ENCODE measurements at regions of chr9 and their contacts with region 1.

Region 1: DNA sequence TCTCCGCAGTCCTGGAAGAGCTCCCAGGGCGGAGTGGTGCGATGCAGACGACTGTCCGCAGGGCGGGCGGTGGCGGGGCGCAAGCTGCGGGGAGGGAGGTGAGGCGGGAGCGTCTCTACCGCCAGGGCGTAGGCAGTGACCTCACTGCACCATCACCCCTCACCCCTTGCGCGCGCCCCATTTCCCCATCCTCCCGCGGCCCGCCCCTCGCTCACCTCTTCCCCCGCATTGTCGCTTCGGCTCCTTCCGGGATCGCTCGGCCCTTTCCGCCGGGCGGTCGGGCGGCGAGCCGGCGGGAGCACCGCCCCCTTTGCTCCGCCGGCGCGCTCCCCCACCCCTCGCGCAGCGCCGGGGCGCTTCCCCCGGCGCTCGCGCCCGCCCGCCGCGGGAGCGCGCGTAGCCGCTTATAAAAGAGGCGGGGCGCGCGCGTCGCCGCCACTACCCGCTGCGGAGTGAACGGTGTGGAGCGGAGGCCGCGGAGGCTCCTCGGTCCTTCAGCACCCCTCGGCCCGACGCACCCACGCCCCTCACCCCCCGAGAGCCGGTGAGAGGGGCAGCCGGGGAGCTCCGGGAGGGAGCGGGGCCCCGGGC is at the start of gene SPTAN1:
- DNase-seq: peak; percentile 92 to 98 (median 96)
- ATAC-seq: peak; percentile 94
- H3K4me3 ChIP-seq: peak within 1 kb of the TSS; percentile 84
- H3K4me3 Mint-ChIP-seq: peak within 1 kb of the TSS in 7 of 10 donors; percentile 85 to 94 (median 92)
- H3K27ac ChIP-seq: peak within 1 kb of the TSS; percentile 94
- H3K27ac Mint-ChIP-seq: peak within 1 kb of the TSS; percentile 92 to 98 (median 97)
- H3K4me1 ChIP-seq: peaks cover 44 to 45% of the 10 kb centered on the region in 2 donors
- H3K4me1 Mint-ChIP-seq: peaks cover 15 to 38% (median 34%) of the 10 kb centered on the region in 7 donors
- H3K27me3 ChIP-seq: no peaks in the 10 kb centered on the region
- H3K27me3 Mint-ChIP-seq: no peaks in the 10 kb centered on the region
- total RNA-seq, gene SPTAN1: 336 to 433 (median 375) TPM

Region 2: GRCh38 chr9:128275996-128276573 is 276.2 kb before region 1 on chr9 and contains the starts of genes GOLGA2 and SWI5:
- CTCF ChIA-PET with region 1: no interaction called
- POLR2A ChIA-PET with region 1: no interaction called
- intact Hi-C with region 1: loop called in 1 of 2 experiments (anchors 1 kb)
- DNase-seq: peak; percentile 98 to 100 (median 100)
- ATAC-seq: peak; percentile 98
- H3K4me3 ChIP-seq: peak within 1 kb of the TSS; percentile 95
- H3K4me3 Mint-ChIP-seq: peak within 1 kb of the TSS; percentile 94 to 98 (median 96)
- H3K27ac ChIP-seq: peak within 1 kb of the TSS; percentile 90
- H3K27ac Mint-ChIP-seq: peak within 1 kb of the TSS; percentile 94 to 98 (median 97)
- H3K4me1 ChIP-seq: peaks cover 16 to 21% of the 10 kb centered on the region in 2 donors
- H3K4me1 Mint-ChIP-seq: peaks cover 24 to 51% (median 46%) of the 10 kb centered on the region in 7 donors
- H3K27me3 ChIP-seq: no peaks in the 10 kb centered on the region
- H3K27me3 Mint-ChIP-seq: peaks cover 0 to 7% (median 0%) of the 10 kb centered on the region in 5 donors
- total RNA-seq, gene GOLGA2: 56.5 to 76.6 (median 70.6) TPM
- total RNA-seq, gene SWI5: 8.7 to 17.4 (median 9.8) TPM

Region 3: DNA sequence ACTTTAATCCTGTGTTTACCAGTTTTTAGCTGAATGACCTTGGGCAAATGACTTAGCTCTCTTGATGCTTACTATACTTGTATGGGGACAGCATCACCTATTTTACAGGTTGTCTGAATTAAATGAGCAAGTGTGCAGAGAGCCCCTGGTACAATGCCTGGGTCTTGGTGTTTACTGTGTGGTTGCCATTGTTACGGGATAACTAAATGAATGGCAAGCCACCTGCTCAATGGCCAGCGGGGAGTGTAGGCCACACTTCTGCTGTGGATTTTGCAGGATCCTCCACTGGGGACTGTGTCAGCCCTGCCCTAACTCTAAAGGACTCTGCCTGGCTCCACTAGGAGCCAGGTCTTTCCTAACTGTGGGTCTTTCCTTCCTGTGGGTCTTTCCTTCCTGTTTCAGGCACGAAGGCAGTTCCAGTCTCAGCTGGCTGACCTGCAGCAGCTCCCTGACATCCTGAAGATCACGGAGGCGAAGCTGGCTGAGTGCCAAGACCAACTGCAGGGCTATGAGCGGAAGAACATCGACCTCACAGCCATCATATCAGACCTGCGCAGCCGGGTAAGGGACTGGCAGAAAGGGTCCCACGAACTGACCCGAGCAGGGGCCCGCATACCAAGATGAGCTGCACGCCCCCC is 58.0 kb before region 1 on chr9:
- CTCF ChIA-PET with region 1: no interaction called
- POLR2A ChIA-PET with region 1: interaction called, 11 read pairs
- intact Hi-C with region 1: no loop called
- DNase-seq: peak in 5 of 9 donors; percentile 15 to 43 (median 27)
- ATAC-seq: no peak
- H3K4me3 ChIP-seq: no peak overlapping the region
- H3K4me3 Mint-ChIP-seq: peak overlapping the region in 2 of 10 donors; percentile 42 to 56
- H3K27ac ChIP-seq: no peak overlapping the region
- H3K27ac Mint-ChIP-seq: peak overlapping the region in 7 of 9 donors; percentile 59 to 78 (median 71)
- H3K4me1 ChIP-seq: no peaks in the 10 kb centered on the region
- H3K4me1 Mint-ChIP-seq: peaks cover 0 to 19% (median 15%) of the 10 kb centered on the region in 7 donors
- H3K27me3 ChIP-seq: no peaks in the 10 kb centered on the region
- H3K27me3 Mint-ChIP-seq: no peaks in the 10 kb centered on the region

Region 4: GRCh38 chr9:128575469-128575868 is 23.2 kb after region 1 on chr9:
- CTCF ChIA-PET with region 1: interaction called, 3 read pairs
- POLR2A ChIA-PET with region 1: interaction called, 17 read pairs
- intact Hi-C with region 1: no loop called
- DNase-seq: no peak
- ATAC-seq: no peak
- H3K4me3 ChIP-seq: no peak overlapping the region
- H3K4me3 Mint-ChIP-seq: peak overlapping the region in 4 of 10 donors; percentile 3 to 50 (median 30)
- H3K27ac ChIP-seq: peak overlapping the region; percentile 23
- H3K27ac Mint-ChIP-seq: peak overlapping the region in 7 of 9 donors; percentile 28 to 77 (median 68)
- H3K4me1 ChIP-seq: peaks cover 0 to 11% of the 10 kb centered on the region in 2 donors
- H3K4me1 Mint-ChIP-seq: peaks cover 0 to 24% (median 17%) of the 10 kb centered on the region in 7 donors
- H3K27me3 ChIP-seq: no peaks in the 10 kb centered on the region
- H3K27me3 Mint-ChIP-seq: no peaks in the 10 kb centered on the region

Region 5: DNA sequence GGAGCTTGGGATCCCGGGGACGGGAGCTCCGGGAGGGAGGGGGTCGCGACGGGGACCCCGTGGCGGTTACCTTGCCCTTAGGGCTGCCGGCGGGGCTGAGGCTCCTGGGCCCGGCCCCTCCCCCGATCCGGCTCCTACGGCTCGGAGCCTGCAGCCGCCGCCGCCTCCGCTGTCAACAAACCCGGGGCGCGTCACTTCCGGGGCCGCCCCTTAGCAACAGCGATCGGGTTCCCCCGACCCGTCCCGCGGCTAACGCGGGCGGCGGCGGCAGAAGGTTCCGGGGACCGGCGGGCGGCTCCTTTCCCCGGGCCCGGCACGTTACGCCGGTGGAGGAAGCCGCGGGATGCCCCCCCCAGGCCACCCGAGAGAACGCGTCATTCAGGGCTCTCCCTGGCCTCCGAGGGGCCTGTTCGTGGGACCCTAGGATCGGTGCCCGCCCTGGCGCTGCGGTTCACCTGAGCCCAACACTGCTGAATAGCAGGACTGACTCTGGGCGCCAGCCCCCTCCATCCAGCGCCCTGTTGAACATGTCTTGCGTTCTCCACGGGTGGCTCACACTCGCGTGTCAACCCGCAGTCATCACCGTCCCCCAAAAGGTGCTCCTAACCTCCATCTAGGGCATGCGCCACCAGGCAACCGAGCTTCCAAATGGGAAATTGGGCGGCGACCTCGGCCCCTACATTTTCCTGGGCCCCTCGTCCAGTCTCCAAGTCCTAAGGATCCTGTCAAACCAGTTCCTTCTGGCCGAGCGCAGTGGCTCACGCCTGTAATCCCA is 219.7 kb after region 1 on chr9 and contains the start of gene ZER1:
- CTCF ChIA-PET with region 1: no interaction called
- POLR2A ChIA-PET with region 1: interaction called, 3 read pairs
- intact Hi-C with region 1: loop called in 1 of 2 experiments (anchors 2 kb)
- DNase-seq: peak; percentile 92 to 98 (median 95)
- ATAC-seq: peak; percentile 97
- H3K4me3 ChIP-seq: peak within 1 kb of the TSS; percentile 97
- H3K4me3 Mint-ChIP-seq: peak within 1 kb of the TSS; percentile 95 to 99 (median 98)
- H3K27ac ChIP-seq: peak within 1 kb of the TSS; percentile 93
- H3K27ac Mint-ChIP-seq: peak within 1 kb of the TSS; percentile 93 to 100 (median 100)
- H3K4me1 ChIP-seq: peaks cover 7 to 12% of the 10 kb centered on the region in 2 donors
- H3K4me1 Mint-ChIP-seq: peaks cover 21 to 40% (median 39%) of the 10 kb centered on the region in 7 donors
- H3K27me3 ChIP-seq: no peaks in the 10 kb centered on the region
- H3K27me3 Mint-ChIP-seq: no peaks in the 10 kb centered on the region
- total RNA-seq, gene ZER1: 22.7 to 51.2 (median 34.7) TPM

Region 6: GRCh38 chr9:128947422-128948301 is 395.4 kb after region 1 on chr9 and contains the starts of genes DOLK and NUP188:
- CTCF ChIA-PET with region 1: no interaction called
- POLR2A ChIA-PET with region 1: no interaction called
- intact Hi-C with region 1: loop called in 1 of 2 experiments (anchors 1 kb)
- DNase-seq: peak; percentile 96 to 100 (median 98)
- ATAC-seq: peak; percentile 95
- H3K4me3 ChIP-seq: peak within 1 kb of the TSS; percentile 87
- H3K4me3 Mint-ChIP-seq: peak within 1 kb of the TSS; percentile 93 to 99 (median 98)
- H3K27ac ChIP-seq: peak within 1 kb of the TSS; percentile 97
- H3K27ac Mint-ChIP-seq: peak within 1 kb of the TSS; percentile 89 to 99 (median 97)
- H3K4me1 ChIP-seq: peaks cover 8 to 14% of the 10 kb centered on the region in 2 donors
- H3K4me1 Mint-ChIP-seq: peaks cover 16 to 49% (median 32%) of the 10 kb centered on the region in 7 donors
- H3K27me3 ChIP-seq: no peaks in the 10 kb centered on the region
- H3K27me3 Mint-ChIP-seq: no peaks in the 10 kb centered on the region
- total RNA-seq, gene DOLK: 6.0 to 12.8 (median 9.5) TPM
- total RNA-seq, gene NUP188: 55.7 to 98.7 (median 63.7) TPM